Naive thymus-derived CD8-positive, alpha-beta T cell (primary cell): ENCODE measurements at regions of chr11 and their contacts with region 1.

Region 1: DNA sequence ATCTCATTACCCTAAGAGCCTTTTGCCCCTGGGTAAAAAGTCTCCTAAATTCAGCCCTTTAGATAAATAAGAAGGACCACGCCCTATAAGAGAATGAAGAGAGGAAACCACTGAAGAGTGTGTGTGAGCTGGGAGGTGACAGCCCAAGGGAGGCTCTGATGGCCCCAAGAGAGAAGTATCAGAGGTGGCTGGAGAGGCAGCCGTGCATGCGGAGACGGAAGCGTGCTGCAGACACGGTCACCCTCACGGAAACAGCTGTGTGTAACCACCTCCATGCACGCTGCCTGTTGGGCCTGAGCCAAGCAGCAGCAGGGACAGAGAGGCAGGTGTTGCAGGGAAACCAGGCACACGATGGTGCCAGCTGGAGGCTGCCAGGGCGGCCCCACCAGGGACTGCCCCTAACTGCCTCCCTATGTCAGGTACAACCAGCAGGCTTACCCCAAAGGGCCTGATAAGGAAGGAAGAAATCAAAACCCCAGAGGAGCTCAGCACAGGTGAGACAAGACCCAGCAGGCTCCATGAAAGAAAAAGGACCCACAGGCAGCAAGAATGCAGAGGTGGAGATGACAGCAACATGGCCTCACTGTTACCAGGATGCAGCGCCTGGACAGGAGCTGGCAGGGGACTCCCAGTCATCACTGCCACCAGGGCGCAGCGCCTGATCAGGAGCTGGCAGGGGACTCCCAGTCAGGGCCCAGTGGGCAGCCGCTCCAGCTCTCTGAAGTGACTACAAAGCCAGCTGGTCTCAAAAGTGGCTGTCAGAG is 7.8 kb downstream of the LARGE2 start:
- DNase-seq: peak in 7 of 10 donors; percentile 12 to 76 (median 36)
- ATAC-seq: peak; percentile 82 to 84
- H3K4me3 Mint-ChIP-seq: peak overlapping the region; percentile 34 to 84 (median 74)
- H3K27ac Mint-ChIP-seq: peak overlapping the region; percentile 84 to 97 (median 90)
- H3K4me1 Mint-ChIP-seq: peaks cover 16 to 58% (median 36%) of the 10 kb centered on the region in 4 donors
- H3K27me3 Mint-ChIP-seq: no peaks in the 10 kb centered on the region

Region 2: DNA sequence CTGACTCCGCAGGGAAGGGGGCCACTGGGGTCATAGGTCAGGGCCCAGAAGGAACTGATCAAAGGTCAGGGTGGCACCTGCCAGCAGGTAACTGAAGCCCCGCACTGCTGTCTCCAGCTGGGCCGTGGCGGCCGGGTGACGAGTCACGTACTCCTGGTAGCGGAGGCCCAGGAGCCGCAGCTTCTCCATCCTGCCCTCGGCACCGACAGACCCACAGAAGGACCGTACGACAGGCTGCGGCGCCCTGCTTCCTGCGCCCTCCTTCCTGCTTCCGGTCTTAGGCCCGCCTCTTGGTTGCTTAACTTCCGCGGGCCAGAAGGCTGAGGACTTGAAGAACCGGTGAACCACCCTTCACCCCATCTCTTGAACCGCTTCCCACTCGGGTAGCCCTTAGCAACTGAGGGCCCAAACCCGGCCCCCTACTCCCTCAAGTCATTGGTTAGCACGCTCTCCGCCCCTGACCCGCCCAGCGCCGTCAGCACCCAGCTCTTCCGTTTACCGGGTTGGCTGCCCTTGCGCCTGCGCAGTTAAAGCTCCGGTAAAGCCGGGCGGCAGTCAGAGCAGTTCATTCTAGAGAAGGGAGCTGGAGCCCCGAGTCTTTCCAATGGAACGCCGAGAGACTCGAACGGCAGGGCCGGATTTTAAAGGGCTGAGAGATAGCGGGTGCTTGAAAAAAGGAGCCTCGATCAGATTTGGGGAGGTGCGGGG is 12.4 kb before region 1 on chr11 and contains the start of gene PEX16:
- POLR2A ChIA-PET with region 1: interaction called, 57 read pairs
- DNase-seq: peak; percentile 89 to 98 (median 96)
- ATAC-seq: peak; percentile 90 to 91
- H3K4me3 Mint-ChIP-seq: peak within 1 kb of the TSS; percentile 90 to 98 (median 95)
- H3K27ac Mint-ChIP-seq: peak within 1 kb of the TSS; percentile 94 to 100 (median 98)
- H3K4me1 Mint-ChIP-seq: peaks cover 16 to 62% (median 59%) of the 10 kb centered on the region in 4 donors
- H3K27me3 Mint-ChIP-seq: peaks cover 0 to 3% (median 0%) of the 10 kb centered on the region in 5 donors
- polyA plus RNA-seq, gene PEX16: 46.1 to 54.1 (median 53.2) TPM

Region 3: DNA sequence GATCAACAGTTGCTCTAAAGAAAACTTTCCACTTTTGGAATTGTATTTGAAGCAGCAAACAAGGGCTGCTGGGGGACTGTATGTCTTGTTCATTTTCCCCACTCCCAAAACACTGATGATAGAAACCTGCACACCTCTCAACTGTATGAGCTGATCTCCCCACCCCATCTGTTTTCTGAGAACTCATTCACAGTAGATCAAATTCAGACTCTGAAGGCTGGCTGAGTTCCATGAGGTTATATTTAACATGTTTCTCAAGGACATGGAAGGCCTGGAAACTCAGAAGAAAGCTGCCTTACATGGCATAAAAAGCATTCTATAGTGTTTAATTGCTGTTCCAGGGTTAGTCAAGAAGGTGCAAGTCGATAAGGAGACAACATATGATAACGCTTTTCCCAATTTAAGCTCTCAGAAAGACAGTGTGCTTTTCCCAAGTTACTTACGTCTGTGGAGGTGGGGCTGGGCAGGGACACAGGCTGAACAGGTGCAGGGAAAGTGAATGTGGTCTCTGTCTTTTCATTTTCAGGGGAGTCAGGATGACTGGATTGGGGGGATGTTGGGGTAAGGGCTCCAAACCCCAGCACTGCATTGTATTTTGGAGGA is 15.3 kb after region 1 on chr11:
- POLR2A ChIA-PET with region 1: no interaction called
- DNase-seq: no peak
- ATAC-seq: no peak
- H3K4me3 Mint-ChIP-seq: no peak overlapping the region
- H3K27ac Mint-ChIP-seq: peak overlapping the region in 1 of 10 donors; percentile 54
- H3K4me1 Mint-ChIP-seq: peaks cover 0 to 2% (median 0%) of the 10 kb centered on the region in 4 donors
- H3K27me3 Mint-ChIP-seq: no peaks in the 10 kb centered on the region

Region 4: GRCh38 chr11:46006418-46007070 is 76.3 kb after region 1 on chr11:
- POLR2A ChIA-PET with region 1: no interaction called
- DNase-seq: peak in 6 of 10 donors; percentile 16 to 63 (median 44)
- ATAC-seq: peak; percentile 84 to 88
- H3K4me3 Mint-ChIP-seq: no peak overlapping the region
- H3K27ac Mint-ChIP-seq: peak overlapping the region in 4 of 10 donors; percentile 12 to 66 (median 27)
- H3K4me1 Mint-ChIP-seq: peaks cover 2 to 17% (median 4%) of the 10 kb centered on the region in 4 donors
- H3K27me3 Mint-ChIP-seq: no peaks in the 10 kb centered on the region